ENCODE measurements at regions of chr5 and their contacts with region 1.

Region 1: DNA sequence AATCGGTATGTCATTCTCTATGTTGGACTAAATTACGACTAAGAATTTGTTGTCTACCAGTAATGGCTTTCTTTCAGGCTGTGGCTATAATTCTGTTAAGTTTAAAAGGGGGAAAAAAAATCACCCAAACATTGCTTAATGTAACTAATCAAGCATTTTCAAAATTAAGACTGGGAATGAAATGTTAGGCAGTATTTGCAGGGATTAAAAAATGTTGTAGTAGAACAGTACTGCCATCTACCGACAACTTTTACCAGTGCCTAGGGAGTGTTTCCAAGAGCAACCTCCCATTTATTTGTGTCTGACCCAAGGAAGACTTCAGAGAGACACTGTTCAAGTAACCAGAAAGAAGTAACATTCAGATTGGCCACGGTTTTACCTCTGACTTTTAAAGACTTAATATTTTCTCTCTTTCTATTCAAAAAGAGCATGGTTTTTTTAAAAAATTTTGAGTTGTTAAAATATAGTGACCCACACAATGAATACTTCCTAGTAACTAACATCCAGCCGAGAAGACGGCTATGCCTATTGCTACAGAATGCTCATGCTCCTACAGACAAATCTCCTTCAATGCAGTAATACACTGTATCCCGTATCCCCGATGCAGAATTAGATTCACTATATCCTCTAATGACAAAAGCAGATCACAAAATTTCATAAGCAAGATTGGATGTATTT is 92.4 kb downstream of the ARL15 start:
- H3K4me3 Mint-ChIP-seq: no peak overlapping the region
- H3K27ac Mint-ChIP-seq: no peak overlapping the region
- H3K4me1 Mint-ChIP-seq: no peaks in the 10 kb centered on the region
- H3K27me3 Mint-ChIP-seq: no peaks in the 10 kb centered on the region

Region 2: DNA sequence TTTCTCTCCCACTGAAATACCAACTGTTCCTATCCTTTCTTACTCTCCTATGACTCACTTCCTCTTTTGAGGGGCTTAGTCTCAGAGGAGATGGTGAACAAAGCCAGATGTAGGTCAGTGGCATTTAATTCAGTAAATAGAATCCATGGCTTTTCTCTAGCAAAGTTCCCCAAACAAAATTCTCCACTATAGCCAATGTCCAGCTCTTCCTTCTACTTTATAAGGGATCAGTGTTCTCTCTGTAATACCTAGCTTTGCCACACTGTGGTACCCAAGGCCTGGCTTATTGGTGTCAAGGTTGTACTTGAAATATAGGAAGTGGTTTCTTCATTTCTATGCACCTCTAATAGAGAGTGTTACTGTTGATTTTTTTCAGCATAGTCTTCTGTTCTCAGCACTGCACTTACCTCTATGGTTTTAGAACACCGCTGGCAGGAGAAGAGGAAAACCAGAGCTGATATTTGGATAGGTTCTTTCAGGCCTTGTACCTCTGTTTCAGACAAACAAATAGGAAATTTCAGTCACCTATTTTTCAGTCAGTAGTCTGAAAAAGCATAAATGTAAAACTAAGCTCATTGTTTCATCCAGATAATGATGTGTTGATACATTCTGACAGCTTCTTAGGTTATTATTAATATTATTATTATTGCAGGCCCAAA is 1269.4 kb before region 1 on chr5:
- intact Hi-C with region 1: loop called (anchors 5 kb)
- H3K4me3 Mint-ChIP-seq: no peak overlapping the region
- H3K27ac Mint-ChIP-seq: no peak overlapping the region
- H3K4me1 Mint-ChIP-seq: no peaks in the 10 kb centered on the region
- H3K27me3 Mint-ChIP-seq: no peaks in the 10 kb centered on the region

Region 3: GRCh38 chr5:53095931-53096525 is 1121.9 kb before region 1 on chr5:
- intact Hi-C with region 1: loop called (anchors 2 kb)
- H3K4me3 Mint-ChIP-seq: no peak overlapping the region
- H3K27ac Mint-ChIP-seq: no peak overlapping the region
- H3K4me1 Mint-ChIP-seq: no peaks in the 10 kb centered on the region
- H3K27me3 Mint-ChIP-seq: no peaks in the 10 kb centered on the region

Region 4: DNA sequence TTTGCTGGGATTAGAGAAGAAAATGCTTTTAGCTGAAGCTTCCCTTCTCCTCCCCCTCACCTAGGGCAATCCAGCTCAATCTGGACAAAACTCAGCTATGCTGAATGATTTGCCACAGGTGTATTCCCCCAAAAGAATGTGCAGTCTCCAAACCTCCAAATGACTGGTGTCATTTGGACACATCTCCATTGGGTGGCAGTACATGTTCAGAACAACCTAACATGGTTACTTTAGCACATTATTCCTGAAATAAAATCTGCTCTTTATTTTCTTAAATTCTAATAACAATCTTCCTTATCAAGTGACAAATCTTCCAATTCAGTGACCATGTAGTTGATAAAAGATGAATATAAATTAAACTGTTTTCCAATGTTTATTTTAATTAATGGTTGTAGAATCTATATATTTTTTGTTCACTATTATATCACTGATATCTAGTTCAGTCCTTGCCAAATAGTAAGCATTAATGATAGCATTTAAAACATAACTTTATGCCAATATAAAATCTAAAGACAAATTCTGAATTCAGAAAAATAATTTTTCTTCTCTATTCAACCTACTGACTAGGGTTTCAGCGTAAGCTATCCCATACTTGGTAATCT is 1047.1 kb before region 1 on chr5:
- intact Hi-C with region 1: loop called (anchors 5 kb)
- H3K4me3 Mint-ChIP-seq: no peak overlapping the region
- H3K27ac Mint-ChIP-seq: no peak overlapping the region
- H3K4me1 Mint-ChIP-seq: peaks cover 34% of the 10 kb centered on the region
- H3K27me3 Mint-ChIP-seq: no peaks in the 10 kb centered on the region

Region 5: GRCh38 chr5:53262348-53262970 is 955.5 kb before region 1 on chr5:
- intact Hi-C with region 1: loop called (anchors 5 kb)
- H3K4me3 Mint-ChIP-seq: no peak overlapping the region
- H3K27ac Mint-ChIP-seq: no peak overlapping the region
- H3K4me1 Mint-ChIP-seq: peaks cover 15% of the 10 kb centered on the region
- H3K27me3 Mint-ChIP-seq: no peaks in the 10 kb centered on the region

Region 6: DNA sequence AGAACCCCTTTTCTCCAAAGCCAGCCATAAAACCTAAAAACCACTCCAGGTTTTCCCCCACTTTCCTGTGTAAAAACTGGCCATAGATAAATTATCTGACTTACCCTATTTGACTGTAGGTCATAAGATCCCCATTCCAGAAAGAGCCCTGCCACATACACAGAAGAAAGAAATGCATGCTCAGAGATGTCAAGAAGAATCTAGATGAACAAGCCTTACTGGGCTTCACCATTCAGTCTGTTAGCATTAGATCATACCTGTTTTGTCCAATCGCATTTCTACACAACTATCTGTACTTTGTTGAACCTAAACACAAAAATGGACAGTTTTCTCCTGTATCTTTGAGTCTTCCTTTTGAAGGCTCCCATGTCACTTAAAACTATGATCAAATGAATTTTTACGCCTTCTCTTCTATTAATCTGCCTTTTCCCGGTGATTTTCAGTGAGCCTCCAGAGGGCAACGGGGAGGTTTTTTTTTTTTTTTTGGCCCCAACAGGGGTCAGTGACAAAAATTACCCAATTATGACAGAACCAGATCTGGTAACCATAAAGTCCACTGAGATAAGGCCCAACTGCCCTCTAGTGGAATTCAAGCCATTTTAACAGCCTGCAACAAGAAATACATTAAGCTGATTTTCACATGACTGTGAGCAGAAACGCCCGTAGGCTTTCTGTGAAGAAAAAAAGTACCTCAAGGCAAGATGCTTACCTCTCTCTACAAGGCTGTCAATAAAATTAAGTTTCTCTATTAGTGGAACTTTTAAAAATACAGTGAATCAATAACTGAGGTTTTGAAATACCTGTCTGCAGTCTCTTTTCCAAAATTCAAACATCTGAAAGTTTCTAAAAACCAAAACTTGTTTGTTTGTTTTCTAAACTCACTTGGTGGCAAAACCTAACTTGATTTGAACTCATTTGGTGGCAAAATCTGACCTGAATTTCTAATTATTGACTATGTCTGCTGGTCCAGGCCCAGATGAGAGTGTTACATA is 787.4 kb before region 1 on chr5:
- intact Hi-C with region 1: loop called (anchors 5 kb)
- H3K4me3 Mint-ChIP-seq: no peak overlapping the region
- H3K27ac Mint-ChIP-seq: no peak overlapping the region
- H3K4me1 Mint-ChIP-seq: no peaks in the 10 kb centered on the region
- H3K27me3 Mint-ChIP-seq: no peaks in the 10 kb centered on the region

Region 7: DNA sequence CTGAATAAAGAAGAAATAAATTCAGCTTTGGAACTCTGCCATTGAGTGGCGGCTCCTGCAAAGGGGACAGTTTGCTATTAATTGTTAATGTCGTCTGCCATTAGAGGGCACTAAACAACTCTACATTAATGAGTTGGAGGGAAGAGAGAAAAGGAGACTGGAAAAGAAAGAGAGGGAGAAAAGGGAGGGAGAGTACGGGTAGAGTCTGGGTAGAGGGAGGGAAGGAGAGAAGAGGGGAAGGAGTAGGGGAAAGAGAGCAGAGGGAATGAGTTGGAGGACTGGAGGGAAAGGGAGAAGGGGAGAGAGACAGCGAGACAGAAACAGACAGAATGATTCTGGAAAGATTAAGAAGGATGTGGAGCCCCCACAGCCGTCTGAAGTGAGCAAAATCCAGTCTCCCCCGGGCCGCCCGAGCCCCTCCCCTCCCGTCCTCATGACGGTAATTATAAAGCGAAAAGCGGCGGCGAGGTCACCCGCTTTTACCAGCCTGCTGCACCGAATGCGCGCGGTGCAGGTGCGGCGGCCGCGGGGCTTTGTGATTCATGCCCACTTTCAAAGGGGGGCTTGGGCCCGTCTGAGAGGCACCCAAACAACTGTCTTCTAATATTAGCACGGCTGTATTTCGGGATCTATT is 739.4 kb before region 1 on chr5:
- intact Hi-C with region 1: loop called (anchors 5 kb)
- H3K4me3 Mint-ChIP-seq: peak overlapping the region; percentile 93
- H3K27ac Mint-ChIP-seq: no peak overlapping the region
- H3K4me1 Mint-ChIP-seq: peaks cover 44% of the 10 kb centered on the region
- H3K27me3 Mint-ChIP-seq: peaks cover 62% of the 10 kb centered on the region

Region 8: GRCh38 chr5:54171645-54172384 is 46.1 kb before region 1 on chr5:
- intact Hi-C with region 1: no loop called
- H3K4me3 Mint-ChIP-seq: no peak overlapping the region
- H3K27ac Mint-ChIP-seq: no peak overlapping the region
- H3K4me1 Mint-ChIP-seq: peaks cover 4% of the 10 kb centered on the region
- H3K27me3 Mint-ChIP-seq: no peaks in the 10 kb centered on the region